ENCODE measurements at regions of chr1 and their contacts with region 1.

Region 1: DNA sequence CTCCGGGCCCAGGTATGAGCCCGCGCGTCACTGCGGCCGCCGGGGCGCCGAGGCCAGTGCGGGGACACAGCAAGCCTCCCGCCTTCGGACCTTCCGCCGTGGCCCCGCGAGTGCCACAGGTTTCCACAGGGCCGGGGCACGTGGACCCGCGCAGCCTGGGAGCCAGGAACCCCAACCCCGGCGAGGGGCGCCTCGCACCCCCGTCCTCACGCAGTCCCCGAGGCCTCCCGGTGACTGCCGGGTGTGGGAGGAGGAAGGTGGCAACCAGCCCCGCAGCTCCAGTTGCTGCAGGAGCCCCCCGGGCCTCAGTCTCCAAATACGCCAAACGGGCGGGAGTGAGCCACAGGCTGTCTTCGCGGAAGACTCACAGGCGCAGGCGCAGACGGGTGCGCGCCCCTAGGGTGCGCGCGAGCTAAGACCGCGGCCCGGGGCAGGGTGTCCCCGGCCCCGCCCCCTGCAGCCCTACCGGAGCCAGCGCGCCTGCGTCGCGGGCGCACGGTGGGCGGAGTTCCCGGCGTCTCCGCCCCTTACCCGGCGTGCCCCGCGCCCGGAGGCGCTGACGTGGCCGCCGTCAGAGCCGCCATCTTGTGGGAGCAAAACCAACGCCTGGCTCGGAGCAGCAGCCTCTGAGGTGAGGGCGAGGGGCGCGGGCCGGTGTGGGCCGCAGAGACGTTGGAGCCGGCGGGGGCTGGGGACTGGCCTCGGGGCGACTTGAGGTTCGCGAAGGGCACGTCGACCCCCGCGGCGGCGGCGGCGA is at the start of gene ARF1:
- DNase-seq: peak; percentile 95
- ATAC-seq: peak; percentile 86
- H3K4me3 Mint-ChIP-seq: peak within 1 kb of the TSS; percentile 92
- H3K27ac Mint-ChIP-seq: peak within 1 kb of the TSS; percentile 93
- H3K4me1 Mint-ChIP-seq: peaks cover 42% of the 10 kb centered on the region
- H3K27me3 Mint-ChIP-seq: no peaks in the 10 kb centered on the region
- total RNA-seq, gene ARF1: 325 to 337 TPM

Region 2: GRCh38 chr1:226940029-226940805 is 1142.1 kb before region 1 on chr1 and contains the start of gene COQ8A:
- CTCF ChIA-PET with region 1: no interaction called
- POLR2A ChIA-PET with region 1: no interaction called
- intact Hi-C with region 1: loop called in 1 of 2 experiments (anchors 1 kb)
- DNase-seq: peak; percentile 100
- ATAC-seq: peak; percentile 97
- H3K4me3 Mint-ChIP-seq: peak within 1 kb of the TSS; percentile 82
- H3K27ac Mint-ChIP-seq: peak within 1 kb of the TSS; percentile 96
- H3K4me1 Mint-ChIP-seq: peaks cover 53% of the 10 kb centered on the region
- H3K27me3 Mint-ChIP-seq: no peaks in the 10 kb centered on the region
- total RNA-seq, gene COQ8A: 21.3 to 26.9 TPM

Region 3: DNA sequence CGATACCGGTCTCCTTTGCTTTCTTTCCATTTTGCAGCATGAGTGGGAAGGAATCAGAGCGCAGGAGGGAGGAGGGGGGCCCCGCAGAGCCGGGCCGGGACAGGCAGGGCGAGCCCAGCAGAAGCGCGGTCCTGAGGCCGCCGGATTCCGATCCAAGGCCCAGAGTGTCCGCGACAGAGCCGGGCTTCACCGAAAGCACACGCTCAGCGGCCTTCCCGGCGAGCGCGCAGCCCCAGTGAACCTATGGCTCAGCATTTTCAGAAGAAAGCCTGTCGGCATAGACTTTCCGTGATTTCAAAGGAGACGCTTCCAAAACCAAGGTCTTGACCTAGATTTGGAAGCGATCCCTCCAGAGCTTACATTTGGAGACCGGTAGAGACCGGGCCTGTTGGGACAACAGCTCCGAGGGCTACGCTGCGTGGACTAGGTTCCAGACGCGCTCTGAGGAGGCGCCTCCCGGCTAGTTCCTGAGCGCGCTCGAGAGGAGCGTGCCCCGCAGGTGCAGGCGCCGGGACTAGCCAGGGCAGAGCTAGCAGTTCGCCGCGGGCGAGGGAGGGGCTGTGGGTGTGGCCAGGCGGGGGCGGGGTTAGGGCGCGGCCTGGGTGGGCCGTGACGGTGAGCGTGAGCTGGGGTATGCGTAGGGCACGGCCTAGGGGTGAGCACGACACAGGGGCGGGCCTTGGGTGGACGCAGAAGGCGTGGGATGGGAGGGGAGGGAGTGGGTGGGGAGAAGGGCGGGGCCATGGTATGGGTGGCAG is 294.6 kb before region 1 on chr1:
- CTCF ChIA-PET with region 1: no interaction called
- POLR2A ChIA-PET with region 1: no interaction called
- intact Hi-C with region 1: loop called in 1 of 2 experiments (anchors 1 kb)
- DNase-seq: peak; percentile 96
- ATAC-seq: peak; percentile 93
- H3K4me3 Mint-ChIP-seq: peak overlapping the region; percentile 69
- H3K27ac Mint-ChIP-seq: peak overlapping the region; percentile 22
- H3K4me1 Mint-ChIP-seq: peaks cover 14% of the 10 kb centered on the region
- H3K27me3 Mint-ChIP-seq: no peaks in the 10 kb centered on the region

Region 4: DNA sequence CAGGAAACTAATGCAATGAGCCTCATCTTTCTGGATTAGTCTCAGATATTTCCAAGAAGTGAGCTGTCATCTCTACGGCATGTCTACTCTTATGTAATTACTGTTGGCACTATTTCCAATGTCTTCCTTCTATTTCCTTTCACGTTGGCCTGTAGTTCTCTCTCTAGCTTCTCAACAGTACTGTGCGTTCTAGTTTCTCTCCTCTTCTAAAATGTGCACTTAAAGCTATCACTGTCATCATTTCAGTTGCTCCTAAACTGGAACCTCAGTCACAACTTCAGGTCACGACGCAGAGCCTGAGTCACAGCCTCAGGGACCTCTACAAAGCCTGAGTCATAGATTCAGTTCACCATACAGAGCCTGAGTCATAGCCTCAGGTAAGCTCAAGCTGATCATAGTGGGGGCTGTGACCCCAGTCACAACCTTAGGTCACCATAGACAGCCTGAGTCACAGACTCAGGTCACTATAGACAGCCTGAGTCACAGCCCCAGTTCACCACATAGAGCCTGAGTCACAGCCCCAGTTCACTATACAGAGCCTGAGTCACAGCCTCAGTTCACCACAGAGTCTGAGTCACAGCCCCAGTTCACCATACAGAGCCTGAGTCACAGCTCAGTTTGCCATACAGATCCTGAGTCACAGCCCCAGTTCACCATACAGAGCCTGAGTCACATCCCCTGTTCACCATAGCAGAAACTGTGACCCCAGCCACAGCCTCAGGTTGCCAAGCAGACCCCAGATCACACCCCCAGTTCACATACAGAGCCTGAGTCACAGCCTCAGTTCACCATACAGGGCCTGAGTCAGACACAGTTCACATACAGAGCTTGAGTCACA is 147.6 kb before region 1 on chr1:
- CTCF ChIA-PET with region 1: no interaction called
- POLR2A ChIA-PET with region 1: no interaction called
- intact Hi-C with region 1: no loop called
- DNase-seq: peak; percentile 79
- ATAC-seq: peak; percentile 95
- H3K4me3 Mint-ChIP-seq: no peak overlapping the region
- H3K27ac Mint-ChIP-seq: peak overlapping the region; percentile 85
- H3K4me1 Mint-ChIP-seq: peaks cover 19% of the 10 kb centered on the region
- H3K27me3 Mint-ChIP-seq: no peaks in the 10 kb centered on the region

Region 5: DNA sequence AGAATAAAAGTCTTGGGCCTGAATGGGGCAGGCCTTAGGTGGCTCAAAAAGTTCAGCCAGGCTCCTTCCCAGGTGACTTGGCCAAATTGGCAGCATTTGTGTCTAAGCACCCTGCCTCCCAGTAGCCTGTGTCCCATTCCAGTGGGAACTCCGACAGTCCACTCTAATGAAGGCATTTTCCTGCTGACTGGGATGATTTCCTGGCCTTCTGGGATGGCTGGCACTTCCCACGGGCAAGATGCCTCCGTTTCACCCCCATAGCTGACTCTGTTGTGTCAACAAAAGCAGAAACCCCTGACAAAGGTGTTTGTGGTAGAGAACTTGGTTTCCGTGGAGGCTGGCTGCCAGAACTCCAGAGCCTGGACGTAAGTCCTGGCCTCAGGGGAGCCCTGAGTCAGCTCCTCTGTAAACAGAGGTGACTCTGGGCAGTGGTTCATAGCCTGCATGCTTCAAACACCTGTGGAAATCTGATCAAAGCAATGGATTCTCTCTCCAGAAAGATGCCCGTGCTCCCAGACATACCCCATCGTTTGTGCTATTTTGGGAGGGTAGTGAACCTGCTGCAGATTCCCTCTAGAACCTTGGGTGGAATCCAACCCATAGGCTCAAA is 38.9 kb before region 1 on chr1:
- CTCF ChIA-PET with region 1: no interaction called
- POLR2A ChIA-PET with region 1: no interaction called
- intact Hi-C with region 1: no loop called
- DNase-seq: no peak
- ATAC-seq: no peak
- H3K4me3 Mint-ChIP-seq: no peak overlapping the region
- H3K27ac Mint-ChIP-seq: no peak overlapping the region
- H3K4me1 Mint-ChIP-seq: no peaks in the 10 kb centered on the region
- H3K27me3 Mint-ChIP-seq: peaks cover 12% of the 10 kb centered on the region

Region 6: GRCh38 chr1:228093038-228093906 is 11.0 kb after region 1 on chr1:
- CTCF ChIA-PET with region 1: interaction called, 6 read pairs
- POLR2A ChIA-PET with region 1: interaction called, 16 read pairs
- intact Hi-C with region 1: no loop called
- DNase-seq: no peak
- ATAC-seq: no peak
- H3K4me3 Mint-ChIP-seq: no peak overlapping the region
- H3K27ac Mint-ChIP-seq: no peak overlapping the region
- H3K4me1 Mint-ChIP-seq: peaks cover 57% of the 10 kb centered on the region
- H3K27me3 Mint-ChIP-seq: no peaks in the 10 kb centered on the region

Region 7: GRCh38 chr1:228118040-228118439 is 35.7 kb after region 1 on chr1:
- CTCF ChIA-PET with region 1: no interaction called
- POLR2A ChIA-PET with region 1: no interaction called
- intact Hi-C with region 1: no loop called
- DNase-seq: no peak
- ATAC-seq: no peak
- H3K4me3 Mint-ChIP-seq: no peak overlapping the region
- H3K27ac Mint-ChIP-seq: no peak overlapping the region
- H3K4me1 Mint-ChIP-seq: peaks cover 7% of the 10 kb centered on the region
- H3K27me3 Mint-ChIP-seq: no peaks in the 10 kb centered on the region

Region 8: GRCh38 chr1:228139944-228140656 is 57.8 kb after region 1 on chr1 and contains the start of gene GUK1:
- CTCF ChIA-PET with region 1: no interaction called
- POLR2A ChIA-PET with region 1: no interaction called
- intact Hi-C with region 1: loop called (anchors 1 kb)
- DNase-seq: peak; percentile 100
- ATAC-seq: peak; percentile 95
- H3K4me3 Mint-ChIP-seq: peak within 1 kb of the TSS; percentile 97
- H3K27ac Mint-ChIP-seq: peak within 1 kb of the TSS; percentile 98
- H3K4me1 Mint-ChIP-seq: peaks cover 24% of the 10 kb centered on the region
- H3K27me3 Mint-ChIP-seq: peaks cover 2% of the 10 kb centered on the region
- total RNA-seq, gene GUK1: 196 to 270 TPM

Region 9: DNA sequence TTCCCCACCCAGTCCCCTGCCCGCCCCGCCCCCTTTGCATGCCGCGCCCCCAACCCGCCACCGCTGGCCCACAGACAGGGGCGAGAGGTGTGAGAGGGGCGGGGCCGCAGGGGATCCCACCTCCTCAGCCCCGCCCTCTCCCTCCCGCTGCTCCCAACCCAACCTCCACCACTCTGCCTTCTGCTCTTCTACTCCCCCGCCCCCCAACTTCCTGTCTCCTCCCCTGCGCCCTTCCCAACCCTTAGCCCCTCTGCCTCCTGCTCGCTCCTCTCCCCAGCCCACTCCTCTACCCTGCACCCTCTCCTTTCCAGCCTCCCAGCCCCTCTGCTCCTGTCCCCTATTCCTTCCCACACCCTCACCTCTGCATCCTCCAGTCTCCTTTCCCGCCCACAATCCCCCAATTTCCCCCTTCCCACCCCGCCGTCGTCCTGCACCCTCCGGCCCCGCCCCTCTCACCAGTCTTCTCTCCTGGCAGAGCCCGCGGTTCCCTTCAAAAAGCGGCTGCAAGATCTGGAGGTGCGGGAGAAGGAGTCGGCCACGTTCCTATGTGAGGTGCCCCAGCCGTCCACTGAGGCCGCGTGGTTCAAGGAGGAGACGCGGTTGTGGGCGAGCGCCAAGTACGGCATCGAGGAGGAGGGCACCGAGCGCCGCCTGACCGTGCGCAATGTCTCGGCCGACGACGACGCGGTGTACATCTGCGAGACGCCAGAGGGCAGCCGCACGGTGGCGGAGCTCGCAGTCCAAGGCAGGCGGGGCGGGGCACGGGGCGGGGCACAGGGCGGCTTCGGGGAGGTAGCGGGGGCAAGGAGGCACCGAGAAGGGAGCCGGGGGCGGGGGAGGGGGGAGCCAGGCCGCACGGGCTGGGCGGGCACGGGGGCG is 130.9 kb after region 1 on chr1:
- CTCF ChIA-PET with region 1: no interaction called
- POLR2A ChIA-PET with region 1: no interaction called
- intact Hi-C with region 1: loop called in 1 of 2 experiments (anchors 1 kb)
- DNase-seq: peak; percentile 96
- ATAC-seq: peak; percentile 94
- H3K4me3 Mint-ChIP-seq: peak overlapping the region; percentile 78
- H3K27ac Mint-ChIP-seq: peak overlapping the region; percentile 75
- H3K4me1 Mint-ChIP-seq: no peaks in the 10 kb centered on the region
- H3K27me3 Mint-ChIP-seq: no peaks in the 10 kb centered on the region

Region 10: DNA sequence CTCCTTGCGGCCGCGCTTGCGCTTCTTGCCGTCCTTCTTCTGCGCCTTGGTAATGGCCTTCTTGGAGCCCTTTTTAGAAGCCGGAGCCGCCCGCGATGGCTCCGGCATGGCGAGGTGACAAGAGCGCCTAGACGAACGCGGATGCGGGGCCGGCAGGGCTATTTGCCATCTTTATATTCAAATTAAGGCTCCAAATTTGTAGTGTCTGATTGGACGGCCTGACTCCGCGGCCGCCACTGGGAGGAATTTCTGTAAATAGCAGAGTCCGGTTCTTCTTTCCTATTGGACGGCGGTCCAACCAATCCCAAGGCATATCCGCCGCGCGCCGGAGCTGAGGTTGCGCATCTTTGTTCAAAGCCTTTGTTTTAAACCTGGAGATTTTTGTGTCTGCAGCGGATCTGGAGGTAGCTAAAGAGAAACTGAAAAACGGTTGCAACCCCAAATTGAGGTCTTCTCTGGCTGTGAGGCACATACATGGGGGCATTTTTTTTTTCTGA is 382.2 kb after region 1 on chr1:
- CTCF ChIA-PET with region 1: no interaction called
- POLR2A ChIA-PET with region 1: no interaction called
- intact Hi-C with region 1: loop called in 1 of 2 experiments (anchors 2 kb)
- DNase-seq: peak; percentile 95
- ATAC-seq: peak; percentile 83
- H3K4me3 Mint-ChIP-seq: peak overlapping the region; percentile 84
- H3K27ac Mint-ChIP-seq: peak overlapping the region; percentile 92
- H3K4me1 Mint-ChIP-seq: peaks cover 50% of the 10 kb centered on the region
- H3K27me3 Mint-ChIP-seq: peaks cover 2% of the 10 kb centered on the region

Region 11: DNA sequence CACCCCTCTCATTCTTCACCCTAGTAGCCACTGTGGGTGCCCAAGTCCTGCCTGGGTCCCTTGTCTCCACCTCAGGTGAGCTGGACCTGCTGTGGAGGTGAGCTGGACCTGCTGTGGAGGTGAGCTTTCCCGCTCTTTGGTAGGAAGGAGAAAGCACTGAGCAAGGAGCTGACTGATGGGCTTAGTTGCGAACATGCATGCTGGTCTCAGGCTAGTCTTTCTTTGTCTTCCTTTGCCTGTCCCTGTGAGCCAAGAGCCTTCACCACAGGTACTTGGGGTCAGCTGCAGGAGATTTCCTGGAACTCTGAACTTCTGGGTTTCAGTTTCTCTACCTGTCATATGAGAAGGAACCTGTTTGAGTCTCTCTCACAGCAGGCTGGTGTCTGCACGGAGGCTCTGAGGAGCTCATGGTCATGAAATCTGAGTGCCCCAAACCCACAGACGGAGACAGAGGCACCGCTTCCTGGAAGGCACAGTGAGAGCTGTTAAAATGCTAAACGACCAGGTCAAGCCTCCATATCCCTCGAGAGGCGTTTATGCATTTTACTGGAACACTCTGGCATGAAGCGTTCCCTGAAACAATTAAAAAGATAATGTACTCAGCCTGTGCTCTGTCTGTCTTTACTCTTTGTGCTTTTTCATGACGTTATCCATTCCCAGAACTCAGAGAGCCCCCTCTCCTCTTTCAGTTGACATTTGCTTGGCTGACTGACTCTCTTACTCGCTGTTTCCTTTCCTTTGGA is 722.5 kb after region 1 on chr1:
- CTCF ChIA-PET with region 1: no interaction called
- POLR2A ChIA-PET with region 1: no interaction called
- intact Hi-C with region 1: no loop called
- DNase-seq: peak; percentile 72
- ATAC-seq: peak; percentile 87
- H3K4me3 Mint-ChIP-seq: no peak overlapping the region
- H3K27ac Mint-ChIP-seq: peak overlapping the region; percentile 71
- H3K4me1 Mint-ChIP-seq: peaks cover 39% of the 10 kb centered on the region
- H3K27me3 Mint-ChIP-seq: no peaks in the 10 kb centered on the region